ENCODE measurements at regions of chr11 and their contacts with region 1.

Region 1: GRCh38 chr11:41996533-41996932 is 537.1 kb upstream of the LRRC4C start:
- DNase-seq: no peak
- ATAC-seq: no peak
- H3K4me3 ChIP-seq: no peak overlapping the region
- H3K27ac ChIP-seq: no peak overlapping the region
- H3K4me1 ChIP-seq: no peaks in the 10 kb centered on the region
- H3K27me3 ChIP-seq: no peaks in the 10 kb centered on the region
- CTCF ChIP-seq: no peak
- EP300 ChIP-seq: no peak
- POLR2A ChIP-seq: no peak
- RAD21 ChIP-seq: no peak

Region 2: DNA sequence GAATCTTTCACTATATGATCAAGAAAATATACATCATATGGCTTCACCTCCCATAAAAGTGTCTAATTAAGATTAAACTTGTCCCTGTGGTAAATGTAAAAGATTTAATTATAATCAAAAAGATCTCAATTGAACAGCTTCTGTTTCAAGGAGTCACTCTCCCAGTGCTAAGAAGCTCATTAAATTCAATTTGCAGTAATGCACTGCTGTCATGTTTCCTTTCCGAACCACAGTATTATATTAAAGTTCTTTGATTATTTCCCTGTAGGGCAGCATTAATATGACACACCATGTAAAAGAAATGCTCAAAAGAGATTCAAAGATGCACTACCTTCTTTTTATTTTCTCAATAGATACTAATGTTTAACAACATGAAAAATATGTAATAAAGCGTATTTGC is 1295.5 kb before region 1 on chr11:
- CTCF ChIA-PET with region 1: no interaction called
- POLR2A ChIA-PET with region 1: no interaction called
- in situ Hi-C with region 1: no loop called
- intact Hi-C with region 1: loop called (anchors 10 kb)
- DNase-seq: no peak
- ATAC-seq: no peak
- H3K4me3 ChIP-seq: no peak overlapping the region
- H3K27ac ChIP-seq: no peak overlapping the region
- H3K4me1 ChIP-seq: no peaks in the 10 kb centered on the region
- H3K27me3 ChIP-seq: no peaks in the 10 kb centered on the region
- CTCF ChIP-seq: no peak
- EP300 ChIP-seq: no peak
- POLR2A ChIP-seq: no peak
- RAD21 ChIP-seq: no peak

Region 3: GRCh38 chr11:41954034-41954433 is 42.5 kb before region 1 on chr11:
- CTCF ChIA-PET with region 1: no interaction called
- POLR2A ChIA-PET with region 1: no interaction called
- in situ Hi-C with region 1: no loop called
- intact Hi-C with region 1: no loop called
- DNase-seq: no peak
- ATAC-seq: no peak
- H3K4me3 ChIP-seq: no peak overlapping the region
- H3K27ac ChIP-seq: no peak overlapping the region
- H3K4me1 ChIP-seq: no peaks in the 10 kb centered on the region
- H3K27me3 ChIP-seq: no peaks in the 10 kb centered on the region
- CTCF ChIP-seq: no peak
- EP300 ChIP-seq: no peak
- POLR2A ChIP-seq: no peak
- RAD21 ChIP-seq: no peak

Region 4: DNA sequence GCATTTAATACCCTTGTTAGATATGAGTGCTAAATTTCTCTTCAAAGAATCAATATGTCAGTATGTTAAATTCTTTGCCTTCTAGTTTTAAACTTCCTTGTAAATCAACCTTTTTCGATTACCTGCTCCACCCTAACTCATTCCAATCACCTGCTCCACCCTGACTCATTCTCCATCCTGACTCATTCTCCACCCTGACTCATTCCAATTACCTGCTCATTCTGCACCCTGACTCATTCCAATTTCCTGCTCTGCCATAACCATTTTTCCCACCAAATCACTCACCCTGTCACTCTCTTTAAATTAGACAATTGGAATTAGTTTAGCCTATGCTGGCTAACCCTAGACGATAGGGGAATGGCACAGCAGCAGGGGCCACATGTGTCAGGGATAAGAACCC is 17.6 kb before region 1 on chr11:
- CTCF ChIA-PET with region 1: no interaction called
- POLR2A ChIA-PET with region 1: no interaction called
- in situ Hi-C with region 1: no loop called
- intact Hi-C with region 1: no loop called
- DNase-seq: no peak
- ATAC-seq: no peak
- H3K4me3 ChIP-seq: no peak overlapping the region
- H3K27ac ChIP-seq: no peak overlapping the region
- H3K4me1 ChIP-seq: no peaks in the 10 kb centered on the region
- H3K27me3 ChIP-seq: no peaks in the 10 kb centered on the region
- CTCF ChIP-seq: no peak
- EP300 ChIP-seq: no peak
- POLR2A ChIP-seq: no peak
- RAD21 ChIP-seq: no peak

Measured in HepG2 (cell line).